Activated CD4-positive, alpha-beta memory T cell treated with anti-CD3 and anti-CD28 coated beads, Interleukin-2, amount 10 ng/mL, durations not matched to agents 7 days and 5 days (primary cell): ENCODE measurements at regions of chr17 and their contacts with region 1.

Region 1: DNA sequence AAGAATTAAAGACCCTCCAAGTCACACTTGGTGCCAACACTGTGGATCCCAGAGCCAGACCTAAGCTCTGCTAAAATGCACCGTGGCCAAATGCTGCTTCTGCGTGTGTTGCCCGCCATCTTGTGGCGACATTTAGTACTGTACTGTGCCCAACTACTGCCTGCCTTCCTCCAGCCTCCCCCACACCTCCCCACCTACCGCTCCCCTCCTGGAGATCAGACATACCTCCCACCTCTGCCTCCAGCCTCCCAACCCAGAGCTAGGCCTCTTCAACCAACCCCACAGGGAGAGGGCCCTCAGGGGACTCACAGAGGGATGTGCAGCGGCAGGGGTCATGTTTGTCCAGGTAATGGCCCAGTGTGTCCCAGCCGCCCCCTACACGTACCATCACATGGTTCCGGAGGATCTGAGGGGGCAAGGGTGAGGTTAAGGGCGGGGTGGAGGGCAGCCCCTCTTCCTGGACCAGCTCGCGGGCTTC is 5.5 kb downstream of the GAS2L2 start:
- DNase-seq: peak; percentile 80
- H3K4me3 Mint-ChIP-seq: no peak overlapping the region
- H3K27ac Mint-ChIP-seq: no peak overlapping the region
- H3K4me1 Mint-ChIP-seq: peaks cover 10% of the 10 kb centered on the region
- H3K27me3 Mint-ChIP-seq: peaks cover 37% of the 10 kb centered on the region

Region 2: DNA sequence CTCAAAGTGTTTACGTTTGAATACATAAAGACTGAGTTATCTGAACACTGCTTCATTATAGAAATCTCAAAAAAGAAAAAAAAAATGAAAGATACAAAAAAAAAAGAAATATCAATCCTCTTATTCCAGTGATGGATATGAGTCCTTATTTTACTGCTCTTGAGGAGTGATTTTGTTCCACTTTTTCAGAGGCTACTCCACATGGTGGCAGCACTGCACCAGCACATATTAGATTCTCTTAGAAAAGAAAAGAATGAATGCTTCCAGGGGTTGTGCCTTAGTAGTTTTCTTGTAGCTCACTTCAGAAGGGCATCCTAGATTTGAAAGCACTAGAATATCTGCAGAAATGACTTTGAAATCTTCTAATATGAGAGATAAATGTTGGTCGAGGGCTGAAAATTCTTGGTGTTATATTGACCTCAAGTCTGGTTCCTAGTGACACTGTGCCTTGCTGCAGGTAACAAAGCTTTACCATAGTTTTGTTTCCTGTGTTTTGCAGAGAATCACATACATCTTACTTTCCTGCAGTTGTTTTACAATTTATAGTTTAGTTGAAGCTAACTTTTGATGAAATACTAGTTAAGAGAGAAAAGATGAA is 134.6 kb before region 1 on chr17:
- CTCF ChIA-PET with region 1: interaction called, 27 read pairs
- POLR2A ChIA-PET with region 1: interaction called, 3 read pairs
- DNase-seq: peak; percentile 45
- H3K4me3 Mint-ChIP-seq: no peak overlapping the region
- H3K27ac Mint-ChIP-seq: no peak overlapping the region
- H3K4me1 Mint-ChIP-seq: no peaks in the 10 kb centered on the region
- H3K27me3 Mint-ChIP-seq: no peaks in the 10 kb centered on the region